GM12878 (cell line): ENCODE measurements at regions of chr7 and their contacts with region 1.

Region 1: DNA sequence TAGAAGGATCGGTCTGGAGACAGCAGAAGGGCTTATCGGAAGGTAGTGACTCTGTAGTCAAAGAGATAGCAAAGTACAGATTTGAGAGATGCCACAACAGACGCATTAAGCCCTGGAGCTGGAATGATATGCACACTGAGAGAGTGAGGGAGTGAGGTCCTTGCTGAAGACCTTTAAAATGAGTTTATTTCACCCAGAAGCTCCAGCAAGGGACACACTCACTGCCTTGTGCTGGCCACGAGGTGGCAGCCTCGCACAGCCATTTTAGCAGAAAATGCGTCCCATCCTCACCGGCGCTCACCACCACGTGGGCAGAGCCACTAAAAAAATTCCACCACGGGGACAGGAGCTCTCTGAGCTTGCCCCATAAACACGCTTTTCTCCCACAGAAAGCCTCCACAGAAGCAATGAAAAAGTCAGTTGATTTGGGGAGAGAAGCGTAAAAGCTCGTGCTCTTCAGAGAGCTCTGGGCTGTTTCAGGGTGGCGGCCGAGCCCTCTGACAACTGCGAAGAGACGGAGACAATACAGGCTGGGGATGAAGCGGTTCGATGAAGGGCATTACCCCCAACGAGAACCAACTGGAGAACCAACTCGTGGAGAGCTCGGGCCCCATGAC is 163.0 kb upstream of the KLF14 start:
- DNase-seq: no peak
- ATAC-seq: peak; percentile 83
- H3K4me3 ChIP-seq: no peak overlapping the region
- H3K27ac ChIP-seq: no peak overlapping the region
- H3K4me1 ChIP-seq: peaks cover 51% of the 10 kb centered on the region
- H3K27me3 ChIP-seq: no peaks in the 10 kb centered on the region
- CTCF ChIP-seq: peak; percentile 75 to 87 (median 83)
- EP300 ChIP-seq: no peak
- POLR2A ChIP-seq: peak; percentile 57; the same call in 1 of the 2 replicates
- RAD21 ChIP-seq: peak; percentile 89

Region 2: DNA sequence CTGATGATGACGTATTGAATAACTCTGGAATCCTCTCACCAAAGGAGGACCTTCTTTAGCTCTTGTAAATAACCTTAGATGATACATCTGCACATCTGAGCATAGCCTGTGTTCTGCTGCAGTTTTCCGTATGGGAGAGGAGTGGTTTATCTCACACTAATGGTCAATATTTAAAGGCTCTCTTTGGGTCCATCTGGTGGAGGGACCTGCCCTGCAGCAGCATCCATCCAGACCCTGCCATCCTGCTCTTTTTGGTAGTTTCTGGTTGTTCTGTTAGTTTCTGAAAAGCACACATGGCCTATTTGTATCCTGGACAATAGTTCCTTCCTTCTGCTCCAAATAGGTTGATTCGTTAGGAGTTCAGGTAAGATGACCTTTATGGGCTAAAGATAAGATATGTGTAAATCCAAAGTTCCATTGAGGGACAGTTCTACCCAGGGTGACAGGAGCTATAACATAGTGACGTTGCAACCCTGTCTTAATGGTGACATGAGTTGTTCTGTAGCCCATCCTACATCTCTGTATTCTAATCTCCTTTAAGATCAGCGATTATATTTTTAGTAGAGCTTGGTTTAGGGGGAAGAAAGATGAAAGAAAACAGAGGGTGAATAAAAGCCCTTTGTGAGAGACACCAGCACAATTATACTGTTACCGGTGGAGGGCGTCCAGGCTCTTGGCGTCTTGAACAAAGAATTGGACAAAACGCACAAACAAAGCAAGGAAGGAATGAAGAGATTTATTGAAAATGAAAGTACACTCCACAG is 103.0 kb before region 1 on chr7:
- CTCF ChIA-PET with region 1: no interaction called
- POLR2A ChIA-PET with region 1: interaction called, 10 read pairs
- RAD21 ChIA-PET with region 1: no interaction called
- SMC1A ChIA-PET with region 1: no interaction called
- in situ Hi-C with region 1: no loop called
- intact Hi-C with region 1: no loop called
- DNase-seq: no peak
- ATAC-seq: no peak
- H3K4me3 ChIP-seq: no peak overlapping the region
- H3K27ac ChIP-seq: no peak overlapping the region
- H3K4me1 ChIP-seq: no peaks in the 10 kb centered on the region
- H3K27me3 ChIP-seq: no peaks in the 10 kb centered on the region
- CTCF ChIP-seq: no peak
- EP300 ChIP-seq: no peak
- POLR2A ChIP-seq: no peak
- RAD21 ChIP-seq: no peak

Region 3: GRCh38 chr7:130912862-130913631 is 16.0 kb after region 1 on chr7:
- CTCF ChIA-PET with region 1: interaction called, 11 read pairs
- POLR2A ChIA-PET with region 1: interaction called, 7 read pairs
- RAD21 ChIA-PET with region 1: interaction called, 55 read pairs
- SMC1A ChIA-PET with region 1: interaction called, 14 read pairs
- in situ Hi-C with region 1: no loop called
- intact Hi-C with region 1: loop called (anchors 1 kb)
- DNase-seq: peak; percentile 80
- ATAC-seq: peak; percentile 95
- H3K4me3 ChIP-seq: peak overlapping the region; percentile 58
- H3K27ac ChIP-seq: peak overlapping the region; percentile 94
- H3K4me1 ChIP-seq: peaks cover 44% of the 10 kb centered on the region
- H3K27me3 ChIP-seq: no peaks in the 10 kb centered on the region
- CTCF ChIP-seq: no peak
- EP300 ChIP-seq: peak; percentile 39 to 78
- POLR2A ChIP-seq: peak; percentile 66
- RAD21 ChIP-seq: no peak

Region 4: DNA sequence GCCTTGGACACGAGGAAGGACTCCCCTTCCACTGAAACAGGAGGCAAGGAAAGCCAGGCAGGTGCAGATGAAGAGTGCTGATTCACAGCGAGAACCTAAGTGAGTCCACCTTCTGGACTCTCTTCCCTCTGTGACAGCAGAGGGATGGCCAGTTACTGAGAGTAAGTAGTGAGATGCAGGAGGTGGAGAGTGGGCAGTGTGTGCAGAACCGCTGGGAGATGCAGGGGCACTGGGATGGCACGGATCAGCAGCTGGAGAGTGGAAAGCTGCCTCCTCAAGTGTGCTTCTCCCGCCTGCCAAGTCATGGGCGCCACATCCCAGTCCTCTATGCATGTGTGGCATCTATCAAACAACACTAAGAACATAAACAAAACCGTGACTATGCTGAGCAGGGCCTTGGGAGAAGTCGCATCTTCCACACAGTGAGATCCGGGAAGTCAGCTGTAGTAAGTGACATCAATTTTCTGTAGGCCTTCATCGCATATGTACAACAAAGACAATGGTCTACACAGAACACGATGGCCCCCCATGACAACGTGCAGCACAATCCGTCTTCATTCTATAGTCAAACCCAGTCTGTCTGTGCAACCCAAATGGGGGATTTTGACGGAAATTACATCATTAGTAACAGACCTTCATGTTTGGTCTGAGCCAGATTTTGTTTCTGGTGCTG is 54.4 kb after region 1 on chr7:
- CTCF ChIA-PET with region 1: interaction called, 16 read pairs
- POLR2A ChIA-PET with region 1: interaction called, 6 read pairs
- RAD21 ChIA-PET with region 1: interaction called, 13 read pairs
- SMC1A ChIA-PET with region 1: interaction called, 50 read pairs
- in situ Hi-C with region 1: no loop called
- intact Hi-C with region 1: no loop called
- DNase-seq: no peak
- ATAC-seq: peak; percentile 45
- H3K4me3 ChIP-seq: peak overlapping the region; percentile 44; the same call in 1 of the 2 replicates
- H3K27ac ChIP-seq: peak overlapping the region; percentile 45
- H3K4me1 ChIP-seq: peaks cover 33% of the 10 kb centered on the region
- H3K27me3 ChIP-seq: no peaks in the 10 kb centered on the region
- CTCF ChIP-seq: no peak
- EP300 ChIP-seq: no peak
- POLR2A ChIP-seq: peak; percentile 79
- RAD21 ChIP-seq: no peak

Region 5: DNA sequence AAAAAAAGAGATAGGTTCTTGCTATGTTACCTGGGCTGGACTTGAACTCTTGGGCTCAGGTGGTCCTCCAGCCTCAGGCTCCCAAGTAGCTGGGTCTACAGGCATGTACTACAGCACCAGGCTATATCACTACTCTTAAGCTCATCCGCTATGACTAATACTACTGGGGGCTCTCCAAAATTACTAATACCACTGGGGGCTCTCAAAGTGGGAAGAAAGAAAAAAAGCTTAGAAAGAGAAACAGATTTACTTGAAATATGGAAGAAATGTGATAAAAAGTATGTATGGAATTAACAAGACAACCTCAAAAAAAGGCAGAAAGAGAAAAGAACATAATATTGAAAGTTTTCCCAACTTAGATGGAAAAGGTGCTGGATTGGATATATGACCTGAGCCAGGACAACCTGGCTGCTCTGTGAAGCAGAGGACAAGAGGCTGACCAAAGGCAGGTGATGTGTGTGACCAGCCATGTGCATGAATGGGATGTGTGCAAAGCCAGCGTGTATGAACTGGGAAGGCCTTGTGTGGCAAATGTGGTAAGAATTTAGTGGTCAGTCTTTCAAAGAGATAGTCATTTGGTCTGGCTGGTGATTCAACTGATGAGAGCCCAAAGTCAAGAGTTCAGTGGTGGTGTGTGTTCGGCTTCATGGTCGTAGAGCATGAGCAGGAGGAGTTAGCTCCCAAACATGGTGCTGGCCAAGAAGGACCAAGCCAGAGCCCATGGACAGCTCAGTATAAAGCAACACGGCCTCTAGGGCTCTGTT is 69.4 kb after region 1 on chr7:
- CTCF ChIA-PET with region 1: interaction called, 40 read pairs
- POLR2A ChIA-PET with region 1: interaction called, 4 read pairs
- RAD21 ChIA-PET with region 1: interaction called, 21 read pairs
- SMC1A ChIA-PET with region 1: interaction called, 17 read pairs
- in situ Hi-C with region 1: no loop called
- intact Hi-C with region 1: no loop called
- DNase-seq: peak; percentile 45
- ATAC-seq: peak; percentile 85
- H3K4me3 ChIP-seq: no peak overlapping the region
- H3K27ac ChIP-seq: no peak overlapping the region
- H3K4me1 ChIP-seq: peaks cover 39% of the 10 kb centered on the region
- H3K27me3 ChIP-seq: no peaks in the 10 kb centered on the region
- CTCF ChIP-seq: no peak
- EP300 ChIP-seq: peak; percentile 52 to 74; a peak in 2 of 4 replicates
- POLR2A ChIP-seq: no peak
- RAD21 ChIP-seq: no peak

Region 6: DNA sequence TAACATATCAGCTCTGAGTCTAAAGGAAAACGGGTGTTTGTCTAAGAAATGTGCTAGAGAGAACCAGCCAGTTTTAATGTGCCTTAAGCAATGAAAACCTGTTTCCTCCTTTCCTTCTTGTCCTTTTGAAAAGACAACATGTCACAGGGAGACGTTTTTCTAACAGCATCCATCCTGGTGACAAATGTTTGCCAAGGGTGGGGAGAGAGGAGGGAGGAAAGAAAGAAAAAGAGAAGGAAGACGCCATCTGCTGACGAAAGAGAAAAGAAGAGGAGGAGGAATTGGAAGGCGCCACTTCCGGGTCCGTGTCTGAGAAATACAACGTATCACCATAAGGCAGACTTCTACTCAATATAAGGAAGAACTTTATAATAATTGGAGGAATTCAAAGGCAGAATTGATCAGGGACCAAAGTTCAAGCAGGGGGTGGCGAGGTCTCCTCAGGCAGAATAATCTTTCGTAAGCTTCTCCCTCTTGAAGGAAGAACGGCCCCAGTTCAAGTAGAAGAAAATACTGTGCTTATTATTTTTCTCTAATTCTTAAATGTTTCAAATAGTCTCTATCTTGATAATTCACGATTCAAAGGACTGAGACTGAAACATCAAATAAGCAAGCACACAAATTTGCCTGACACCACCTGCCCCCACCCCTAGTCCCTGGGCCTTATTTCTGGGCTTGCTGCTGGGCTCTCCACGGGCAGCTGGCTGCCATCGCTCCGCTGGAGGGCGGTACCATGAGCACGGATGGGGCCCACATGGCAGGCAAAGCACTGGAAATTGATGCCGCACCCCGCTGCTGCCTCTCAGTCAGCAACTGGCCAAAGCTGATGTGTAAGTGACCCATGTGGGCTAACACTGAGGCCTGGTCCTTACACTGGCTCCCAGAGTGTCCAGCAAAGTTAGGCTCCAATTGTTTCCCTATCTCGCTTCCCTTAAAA is 110.7 kb after region 1 on chr7:
- CTCF ChIA-PET with region 1: interaction called, 105 read pairs
- POLR2A ChIA-PET with region 1: interaction called, 3 read pairs
- RAD21 ChIA-PET with region 1: interaction called, 27 read pairs
- SMC1A ChIA-PET with region 1: interaction called, 40 read pairs
- in situ Hi-C with region 1: no loop called
- intact Hi-C with region 1: loop called (anchors 1 kb)
- DNase-seq: peak; percentile 63
- ATAC-seq: peak; percentile 64
- H3K4me3 ChIP-seq: peak overlapping the region; percentile 22; the same call in 1 of the 2 replicates
- H3K27ac ChIP-seq: peak overlapping the region; percentile 89
- H3K4me1 ChIP-seq: peaks cover 48% of the 10 kb centered on the region
- H3K27me3 ChIP-seq: no peaks in the 10 kb centered on the region
- CTCF ChIP-seq: peak; percentile 46 to 66 (median 54)
- EP300 ChIP-seq: no peak
- POLR2A ChIP-seq: peak; percentile 64
- RAD21 ChIP-seq: peak; percentile 80

Region 7: DNA sequence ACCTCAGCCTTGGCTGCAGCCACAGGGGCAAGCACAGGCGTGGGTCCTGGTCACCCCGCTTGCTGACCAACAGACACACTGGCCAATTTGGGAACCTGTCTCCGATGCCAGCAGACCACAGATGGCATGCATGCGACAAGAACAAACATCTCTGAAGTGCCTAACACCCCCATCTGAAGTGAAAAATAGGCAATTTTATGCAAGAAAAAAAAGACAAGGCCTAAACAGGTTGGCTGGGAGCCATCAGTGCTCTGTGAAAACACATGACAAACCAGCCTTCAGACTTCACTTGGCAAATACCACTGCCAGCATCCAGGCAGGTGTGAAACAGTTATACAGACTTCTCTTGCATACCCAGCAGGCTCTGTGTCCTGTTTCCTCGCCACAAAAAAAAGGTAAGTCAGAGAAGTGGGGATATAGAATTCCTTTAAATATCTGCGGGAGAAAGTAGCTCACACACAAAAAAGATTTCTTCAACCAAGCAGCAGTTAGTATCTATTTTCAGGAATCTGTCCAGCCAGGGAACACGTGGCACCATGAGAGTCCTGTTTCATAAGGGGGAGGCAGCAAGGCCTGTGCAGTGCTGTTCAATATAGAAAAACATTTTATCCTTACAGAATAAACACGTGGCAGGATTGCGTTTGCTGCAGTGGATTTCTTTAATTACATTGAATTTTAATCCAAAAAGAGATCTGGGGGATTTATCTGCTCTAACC is 137.3 kb after region 1 on chr7:
- CTCF ChIA-PET with region 1: interaction called, 166 read pairs
- POLR2A ChIA-PET with region 1: interaction called, 4 read pairs
- RAD21 ChIA-PET with region 1: interaction called, 77 read pairs
- SMC1A ChIA-PET with region 1: interaction called, 84 read pairs
- in situ Hi-C with region 1: no loop called
- intact Hi-C with region 1: no loop called
- DNase-seq: no peak
- ATAC-seq: peak; percentile 7; the same call in 1 of the 3 replicates
- H3K4me3 ChIP-seq: no peak overlapping the region
- H3K27ac ChIP-seq: peak overlapping the region; percentile 76
- H3K4me1 ChIP-seq: peaks cover 63% of the 10 kb centered on the region
- H3K27me3 ChIP-seq: no peaks in the 10 kb centered on the region
- CTCF ChIP-seq: no peak
- EP300 ChIP-seq: no peak
- POLR2A ChIP-seq: peak; percentile 52; the same call in 1 of the 2 replicates
- RAD21 ChIP-seq: no peak

Region 8: GRCh38 chr7:131581241-131582051 is 684.4 kb after region 1 on chr7:
- CTCF ChIA-PET with region 1: no interaction called
- POLR2A ChIA-PET with region 1: no interaction called
- RAD21 ChIA-PET with region 1: no interaction called
- SMC1A ChIA-PET with region 1: no interaction called
- in situ Hi-C with region 1: no loop called
- intact Hi-C with region 1: no loop called
- DNase-seq: no peak
- ATAC-seq: no peak
- H3K4me3 ChIP-seq: no peak overlapping the region
- H3K27ac ChIP-seq: no peak overlapping the region
- H3K4me1 ChIP-seq: no peaks in the 10 kb centered on the region
- H3K27me3 ChIP-seq: no peaks in the 10 kb centered on the region; a peak in 1 of 4 replicates
- CTCF ChIP-seq: no peak
- EP300 ChIP-seq: no peak
- POLR2A ChIP-seq: no peak
- RAD21 ChIP-seq: no peak